ENCODE measurements at regions of chr1 and their contacts with region 1.

Region 1: GRCh38 chr1:167499664-167500101 is 18.6 kb downstream of the CD247 start:
- DNase-seq: peak; percentile 95
- H3K4me3 ChIP-seq: peak overlapping the region; percentile 54
- H3K27ac ChIP-seq: peak overlapping the region; percentile 90
- H3K4me1 ChIP-seq: peaks cover 58% of the 10 kb centered on the region
- CTCF ChIP-seq: no peak

Region 2: DNA sequence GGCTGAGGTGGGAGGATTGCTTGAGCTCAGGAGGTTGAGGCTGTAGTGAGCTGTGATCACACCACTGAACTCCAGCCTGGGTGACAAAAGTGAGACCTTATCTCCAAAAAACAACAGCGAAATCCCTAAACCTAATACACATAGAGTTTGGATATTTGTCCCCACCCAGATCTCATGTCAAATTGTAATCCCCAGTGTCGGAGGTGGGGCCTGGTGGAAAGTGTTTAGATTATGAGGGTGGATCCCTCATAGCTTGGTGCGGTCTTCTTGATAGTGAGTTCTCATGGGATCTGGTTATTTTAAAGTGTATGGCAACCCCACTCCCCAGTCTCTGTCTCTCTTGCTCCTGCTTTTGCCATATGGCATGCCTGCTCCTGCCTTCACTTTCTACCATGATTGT is 185.0 kb before region 1 on chr1:
- CTCF ChIA-PET with region 1: no interaction called
- POLR2A ChIA-PET with region 1: no interaction called
- intact Hi-C with region 1: no loop called
- DNase-seq: no peak
- H3K4me3 ChIP-seq: no peak overlapping the region
- H3K27ac ChIP-seq: no peak overlapping the region
- H3K4me1 ChIP-seq: no peaks in the 10 kb centered on the region
- CTCF ChIP-seq: no peak

Region 3: DNA sequence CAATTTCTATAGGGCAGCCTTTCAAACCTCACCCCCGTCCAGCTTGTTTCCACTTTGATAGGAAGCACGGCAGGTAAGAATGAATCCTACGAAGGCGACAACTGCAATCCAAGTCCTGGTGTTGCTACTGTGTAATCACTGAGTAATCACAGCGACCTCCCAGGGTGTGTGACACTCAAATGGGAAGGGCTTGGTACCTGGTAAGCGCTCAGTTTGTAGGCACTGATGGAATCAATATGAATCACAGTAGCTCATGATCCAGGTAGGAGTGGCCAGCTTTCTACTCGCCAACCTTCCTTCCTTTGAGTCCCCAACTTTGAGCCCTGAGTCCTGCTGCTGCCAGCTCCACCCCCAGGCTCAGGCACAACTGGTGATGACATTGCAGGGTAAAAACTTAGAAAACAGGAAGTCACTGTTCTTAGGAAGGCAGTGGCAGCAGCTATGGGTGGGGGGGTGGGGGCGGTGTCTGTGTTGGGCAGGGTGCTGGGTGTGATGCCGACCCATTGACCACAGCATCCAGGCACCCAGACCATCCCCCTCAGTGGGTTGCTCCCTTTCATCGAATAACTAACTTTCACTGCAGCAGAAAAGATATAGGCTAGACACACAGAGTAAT is 52.1 kb before region 1 on chr1:
- CTCF ChIA-PET with region 1: no interaction called
- POLR2A ChIA-PET with region 1: interaction called, 15 read pairs
- intact Hi-C with region 1: no loop called
- DNase-seq: peak; percentile 80
- H3K4me3 ChIP-seq: peak overlapping the region; percentile 46
- H3K27ac ChIP-seq: peak overlapping the region; percentile 41
- H3K4me1 ChIP-seq: peaks cover 49% of the 10 kb centered on the region
- CTCF ChIP-seq: no peak; the same call in 1 of the 2 replicates

Region 4: GRCh38 chr1:167454894-167455785 is 44.5 kb before region 1 on chr1:
- CTCF ChIA-PET with region 1: no interaction called
- POLR2A ChIA-PET with region 1: interaction called, 12 read pairs
- intact Hi-C with region 1: no loop called
- DNase-seq: peak; percentile 75
- H3K4me3 ChIP-seq: peak overlapping the region; percentile 70
- H3K27ac ChIP-seq: no peak overlapping the region
- H3K4me1 ChIP-seq: peaks cover 40% of the 10 kb centered on the region
- CTCF ChIP-seq: no peak

Region 5: GRCh38 chr1:167467126-167467710 is 32.5 kb before region 1 on chr1:
- CTCF ChIA-PET with region 1: no interaction called
- POLR2A ChIA-PET with region 1: interaction called, 10 read pairs
- intact Hi-C with region 1: no loop called
- DNase-seq: no peak
- H3K4me3 ChIP-seq: no peak overlapping the region
- H3K27ac ChIP-seq: no peak overlapping the region
- H3K4me1 ChIP-seq: no peaks in the 10 kb centered on the region
- CTCF ChIP-seq: no peak

Region 6: DNA sequence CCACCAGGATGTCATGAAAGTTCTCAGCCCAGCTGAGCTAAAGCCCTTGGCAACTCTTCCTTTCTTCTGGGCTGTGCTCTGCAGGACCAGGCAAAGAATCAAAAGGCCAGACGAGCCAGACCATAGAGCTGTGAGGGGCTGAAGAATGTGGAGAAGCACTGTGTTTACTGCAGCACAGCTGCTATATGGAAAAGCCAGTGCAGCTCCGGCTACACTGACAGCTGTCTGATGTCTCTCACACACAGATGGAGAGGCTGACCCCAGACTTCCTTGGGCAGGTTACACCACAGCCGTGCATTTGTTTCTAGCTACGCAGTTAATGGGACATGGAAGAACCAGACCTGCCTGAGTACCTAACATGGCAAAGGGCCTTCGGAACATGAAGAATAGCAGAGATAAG is 21.7 kb before region 1 on chr1:
- CTCF ChIA-PET with region 1: no interaction called
- POLR2A ChIA-PET with region 1: interaction called, 30 read pairs
- intact Hi-C with region 1: no loop called
- DNase-seq: no peak
- H3K4me3 ChIP-seq: no peak overlapping the region
- H3K27ac ChIP-seq: no peak overlapping the region
- H3K4me1 ChIP-seq: peaks cover 14% of the 10 kb centered on the region
- CTCF ChIP-seq: no peak